Caco-2 (cell line): ENCODE measurements at regions of chr19 and their contacts with region 1.

Region 1: GRCh38 chr19:49073514-49074378 is 1.2 kb upstream of the KCNA7 start:
- DNase-seq: peak; percentile 59 to 72
- H3K4me3 ChIP-seq: no peak overlapping the region
- H3K4me3 Mint-ChIP-seq: peak overlapping the region; percentile 78
- H3K27ac Mint-ChIP-seq: peak overlapping the region; percentile 60
- H3K4me1 ChIP-seq: peaks cover 11% of the 10 kb centered on the region
- H3K4me1 Mint-ChIP-seq: peaks cover 17% of the 10 kb centered on the region
- H3K27me3 ChIP-seq: no peaks in the 10 kb centered on the region
- H3K27me3 Mint-ChIP-seq: no peaks in the 10 kb centered on the region
- CTCF ChIP-seq: peak; percentile 44 to 53

Region 2: GRCh38 chr19:48780631-48781391 is 292.9 kb before region 1 on chr19:
- CTCF ChIA-PET with region 1: no interaction called
- POLR2A ChIA-PET with region 1: no interaction called
- intact Hi-C with region 1: loop called (anchors 5 kb)
- DNase-seq: peak; percentile 77 to 86
- H3K4me3 ChIP-seq: no peak overlapping the region
- H3K4me3 Mint-ChIP-seq: no peak overlapping the region
- H3K27ac Mint-ChIP-seq: peak overlapping the region; percentile 26
- H3K4me1 ChIP-seq: peaks cover 23% of the 10 kb centered on the region
- H3K4me1 Mint-ChIP-seq: peaks cover 18% of the 10 kb centered on the region
- H3K27me3 ChIP-seq: no peaks in the 10 kb centered on the region
- H3K27me3 Mint-ChIP-seq: no peaks in the 10 kb centered on the region
- CTCF ChIP-seq: no peak

Region 3: DNA sequence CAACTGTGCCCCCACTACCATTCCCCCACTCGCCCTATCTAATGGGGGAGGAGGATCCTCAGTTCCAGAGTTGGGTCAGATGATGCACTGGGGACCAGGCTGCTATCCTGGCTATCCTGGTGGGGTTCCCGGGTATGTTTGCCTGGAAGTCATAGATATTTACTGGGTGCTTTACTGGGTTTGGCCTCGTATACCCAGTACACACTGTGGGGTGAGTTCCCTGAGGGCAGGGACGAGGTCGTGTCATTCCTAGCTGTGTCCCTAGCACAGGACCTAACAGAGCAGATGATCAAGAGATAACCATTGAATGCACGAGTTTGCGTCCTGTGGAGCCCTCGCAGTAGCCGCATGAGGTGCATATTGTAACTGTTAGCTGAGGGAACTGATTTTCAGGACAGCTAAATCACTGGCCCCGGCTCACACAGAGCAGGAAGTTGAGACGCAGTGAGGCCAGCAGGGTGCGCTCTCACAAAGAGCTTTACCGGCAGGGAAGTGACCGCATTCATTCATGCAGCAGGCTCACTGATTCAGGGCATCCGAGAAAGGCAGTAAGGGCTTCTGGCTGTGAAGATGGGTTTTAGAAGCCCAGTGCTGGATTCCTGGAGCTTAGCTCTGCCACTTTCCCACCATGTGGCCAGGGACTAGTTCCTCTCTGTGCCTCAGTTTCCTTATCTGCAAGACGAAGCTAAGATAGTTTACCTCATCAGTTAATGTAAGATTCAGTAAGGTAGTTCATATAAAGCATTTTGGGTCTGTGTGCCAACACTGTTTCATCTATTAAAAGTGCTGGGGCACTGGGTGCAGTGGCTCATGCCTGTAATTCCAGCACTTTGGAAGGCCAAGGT is 74.0 kb before region 1 on chr19:
- CTCF ChIA-PET with region 1: interaction called, 16 read pairs
- POLR2A ChIA-PET with region 1: no interaction called
- intact Hi-C with region 1: loop called (anchors 5 kb)
- DNase-seq: peak; percentile 59 to 76
- H3K4me3 ChIP-seq: no peak overlapping the region
- H3K4me3 Mint-ChIP-seq: no peak overlapping the region
- H3K27ac Mint-ChIP-seq: no peak overlapping the region
- H3K4me1 ChIP-seq: no peaks in the 10 kb centered on the region
- H3K4me1 Mint-ChIP-seq: peaks cover 8% of the 10 kb centered on the region
- H3K27me3 ChIP-seq: no peaks in the 10 kb centered on the region
- H3K27me3 Mint-ChIP-seq: no peaks in the 10 kb centered on the region
- CTCF ChIP-seq: peak; percentile 70 to 75

Region 4: DNA sequence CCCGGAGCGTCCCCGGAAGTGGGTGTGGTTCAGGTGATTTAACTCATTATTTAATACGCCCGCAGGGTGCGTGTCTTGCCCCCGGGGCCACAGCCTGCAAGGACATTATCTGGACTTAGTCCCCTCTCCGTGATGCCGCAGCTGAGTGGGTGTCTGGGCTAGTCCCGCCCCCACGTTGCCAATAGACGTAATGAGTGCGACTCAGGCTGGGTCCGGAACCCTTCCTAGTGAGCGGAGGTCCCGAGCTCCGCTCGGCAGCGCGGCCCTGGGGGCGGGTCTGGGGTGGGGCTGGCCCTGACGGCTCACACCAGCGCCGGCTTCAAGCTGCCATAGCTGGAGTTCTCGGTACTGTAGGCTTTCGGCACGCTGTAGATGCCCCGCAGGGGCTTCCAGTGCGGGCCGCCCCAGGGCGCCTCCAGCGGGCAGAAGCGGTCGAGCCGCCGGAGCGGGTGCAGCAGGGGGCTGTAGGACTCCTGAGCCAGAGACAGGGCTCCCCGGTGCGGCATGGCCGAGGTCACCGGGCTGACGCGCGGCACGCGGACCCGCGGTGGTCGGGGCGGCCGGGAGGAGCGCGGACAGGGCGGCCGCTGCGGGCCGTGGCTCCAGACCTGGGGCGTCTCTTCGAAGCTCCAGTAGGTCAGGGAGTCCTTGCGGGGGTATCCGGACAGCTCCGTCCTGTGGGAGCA is 55.9 kb before region 1 on chr19:
- CTCF ChIA-PET with region 1: interaction called, 10 read pairs
- POLR2A ChIA-PET with region 1: interaction called, 3 read pairs
- intact Hi-C with region 1: loop called (anchors 1 kb)
- DNase-seq: peak; percentile 87 to 88
- H3K4me3 ChIP-seq: peak overlapping the region; percentile 49
- H3K4me3 Mint-ChIP-seq: peak overlapping the region; percentile 79
- H3K27ac Mint-ChIP-seq: no peak overlapping the region
- H3K4me1 ChIP-seq: 0 out of 2 replicates have a peak, but pooled peaks cover 9% of the 10 kb centered on the region
- H3K4me1 Mint-ChIP-seq: peaks cover 21% of the 10 kb centered on the region
- H3K27me3 ChIP-seq: no peaks in the 10 kb centered on the region; the same call in 1 of the 2 replicates
- H3K27me3 Mint-ChIP-seq: no peaks in the 10 kb centered on the region
- CTCF ChIP-seq: peak; percentile 47 to 71

Region 5: GRCh38 chr19:49042177-49042576 is 31.6 kb before region 1 on chr19:
- CTCF ChIA-PET with region 1: no interaction called
- POLR2A ChIA-PET with region 1: no interaction called
- intact Hi-C with region 1: no loop called
- DNase-seq: no peak
- H3K4me3 ChIP-seq: no peak overlapping the region
- H3K4me3 Mint-ChIP-seq: no peak overlapping the region
- H3K27ac Mint-ChIP-seq: no peak overlapping the region
- H3K4me1 ChIP-seq: no peaks in the 10 kb centered on the region
- H3K4me1 Mint-ChIP-seq: no peaks in the 10 kb centered on the region
- H3K27me3 ChIP-seq: no peaks in the 10 kb centered on the region
- H3K27me3 Mint-ChIP-seq: no peaks in the 10 kb centered on the region
- CTCF ChIP-seq: no peak